Activated T-helper 1 cell treated with anti-CD3 and anti-CD28 coated beads, Interleukin-12 subunit alpha, Interleukin-12 subunit beta, Interleukin-2, Interleukin-4 antibody, amounts not matched to agents 30 ng/mL and 10 ng/mL and 1 ng/mL, durations not matched to agents 14 hours and 24 hours and 36 hours (primary cell): ENCODE measurements at regions of chr5 and their contacts with region 1.

Region 1: GRCh38 chr5:66757188-66757833 is 161.1 kb downstream of the MAST4 start:
- DNase-seq: no peak
- H3K4me3 Mint-ChIP-seq: no peak overlapping the region
- H3K27ac Mint-ChIP-seq: no peak overlapping the region
- H3K4me1 Mint-ChIP-seq: no peaks in the 10 kb centered on the region
- H3K27me3 Mint-ChIP-seq: peaks cover 26% of the 10 kb centered on the region

Region 2: GRCh38 chr5:65840071-65840470 is 917.2 kb before region 1 on chr5:
- intact Hi-C with region 1: no loop called
- DNase-seq: no peak
- H3K4me3 Mint-ChIP-seq: no peak overlapping the region
- H3K27ac Mint-ChIP-seq: no peak overlapping the region
- H3K4me1 Mint-ChIP-seq: peaks cover under 1% of the 10 kb centered on the region
- H3K27me3 Mint-ChIP-seq: no peaks in the 10 kb centered on the region

Region 3: GRCh38 chr5:66529182-66529581 is 228.1 kb before region 1 on chr5:
- intact Hi-C with region 1: loop called (anchors 5 kb)
- DNase-seq: no peak
- H3K4me3 Mint-ChIP-seq: no peak overlapping the region
- H3K27ac Mint-ChIP-seq: no peak overlapping the region
- H3K4me1 Mint-ChIP-seq: no peaks in the 10 kb centered on the region
- H3K27me3 Mint-ChIP-seq: peaks cover 22% of the 10 kb centered on the region